ENCODE measurements at regions of chr7 and their contacts with region 1.

Region 1: GRCh38 chr7:18495412-18496340 is at the start of gene HDAC9:
- DNase-seq: peak in 1 of 2 donors; percentile 71
- H3K4me3 ChIP-seq: peak within 1 kb of the TSS; percentile 55 to 67
- H3K27ac ChIP-seq: peak within 1 kb of the TSS; percentile 77 to 78
- H3K4me1 ChIP-seq: peaks cover 0 to 24% of the 10 kb centered on the region in 2 donors
- H3K27me3 ChIP-seq: no peaks in the 10 kb centered on the region
- CTCF ChIP-seq: no peak
- total RNA-seq, gene HDAC9: 33.4 TPM

Region 2: DNA sequence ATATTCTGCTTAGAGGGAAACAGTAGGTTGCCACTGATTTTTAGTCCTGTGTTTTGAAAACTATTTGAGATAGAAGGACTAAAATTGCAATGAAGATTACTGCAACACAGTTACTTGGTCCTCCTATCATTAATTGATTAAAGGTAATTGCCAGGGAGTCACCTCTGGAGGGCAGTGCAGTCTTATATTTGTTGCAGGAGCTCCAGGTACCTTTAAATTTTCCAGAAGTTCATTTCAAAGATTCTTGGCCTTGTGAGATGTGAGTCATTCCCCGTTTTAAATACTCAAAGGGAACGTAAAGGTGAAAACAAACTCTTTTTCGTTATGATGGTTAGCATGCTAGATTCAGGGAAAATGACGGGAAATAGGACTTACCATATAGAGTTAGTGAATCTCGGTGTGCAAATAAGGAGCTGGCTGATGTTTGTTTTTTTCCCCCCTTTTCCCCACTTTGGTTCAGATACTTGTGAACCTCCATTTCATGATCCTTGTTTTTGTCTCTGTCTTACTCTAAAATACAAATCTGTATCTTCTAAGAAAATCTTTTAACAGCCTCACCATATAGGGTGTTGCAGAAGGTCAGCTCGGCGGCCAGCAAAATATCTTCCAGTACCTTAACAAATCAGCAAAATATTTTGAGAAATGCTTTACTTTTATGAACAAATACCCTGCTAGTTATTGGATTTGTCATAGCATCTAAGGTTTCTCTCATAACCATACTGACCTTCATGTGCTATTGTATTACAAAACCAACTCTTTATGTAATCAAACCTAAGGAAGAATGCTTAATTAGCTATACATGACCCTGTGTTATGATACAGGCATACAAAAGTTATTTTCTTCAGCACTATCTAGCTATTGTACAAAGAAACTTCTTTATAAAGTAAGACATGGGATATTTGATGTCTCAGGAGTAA is 143.1 kb before region 1 on chr7:
- intact Hi-C with region 1: loop called (anchors 5 kb)
- DNase-seq: peak in 1 of 2 donors; percentile 66
- H3K4me3 ChIP-seq: peak overlapping the region in 1 of 2 donors; percentile 10
- H3K27ac ChIP-seq: no peak overlapping the region
- H3K4me1 ChIP-seq: peaks cover 0 to 11% of the 10 kb centered on the region in 2 donors
- H3K27me3 ChIP-seq: no peaks in the 10 kb centered on the region
- CTCF ChIP-seq: peak; percentile 38 to 69 (median 52)

Region 3: GRCh38 chr7:18393465-18394118 is 102.1 kb before region 1 on chr7:
- intact Hi-C with region 1: loop called (anchors 5 kb)
- DNase-seq: no peak
- H3K4me3 ChIP-seq: no peak overlapping the region
- H3K27ac ChIP-seq: no peak overlapping the region
- H3K4me1 ChIP-seq: peaks cover 5 to 22% of the 10 kb centered on the region in 2 donors
- H3K27me3 ChIP-seq: no peaks in the 10 kb centered on the region
- CTCF ChIP-seq: no peak

Region 4: GRCh38 chr7:18558503-18558902 is 62.8 kb after region 1 on chr7:
- intact Hi-C with region 1: loop called (anchors 5 kb)
- DNase-seq: no peak
- H3K4me3 ChIP-seq: no peak overlapping the region
- H3K27ac ChIP-seq: peak overlapping the region; percentile 70 to 76
- H3K4me1 ChIP-seq: peaks cover 5 to 28% of the 10 kb centered on the region in 2 donors
- H3K27me3 ChIP-seq: no peaks in the 10 kb centered on the region
- CTCF ChIP-seq: no peak

Region 5: GRCh38 chr7:18570890-18571478 is 75.3 kb after region 1 on chr7:
- intact Hi-C with region 1: loop called (anchors 2 kb)
- DNase-seq: no peak
- H3K4me3 ChIP-seq: peak overlapping the region; percentile 28 to 51
- H3K27ac ChIP-seq: peak overlapping the region; percentile 41 to 50
- H3K4me1 ChIP-seq: peaks cover 0 to 31% of the 10 kb centered on the region in 2 donors
- H3K27me3 ChIP-seq: no peaks in the 10 kb centered on the region
- CTCF ChIP-seq: peak; percentile 12 to 55 (median 40)

Region 6: DNA sequence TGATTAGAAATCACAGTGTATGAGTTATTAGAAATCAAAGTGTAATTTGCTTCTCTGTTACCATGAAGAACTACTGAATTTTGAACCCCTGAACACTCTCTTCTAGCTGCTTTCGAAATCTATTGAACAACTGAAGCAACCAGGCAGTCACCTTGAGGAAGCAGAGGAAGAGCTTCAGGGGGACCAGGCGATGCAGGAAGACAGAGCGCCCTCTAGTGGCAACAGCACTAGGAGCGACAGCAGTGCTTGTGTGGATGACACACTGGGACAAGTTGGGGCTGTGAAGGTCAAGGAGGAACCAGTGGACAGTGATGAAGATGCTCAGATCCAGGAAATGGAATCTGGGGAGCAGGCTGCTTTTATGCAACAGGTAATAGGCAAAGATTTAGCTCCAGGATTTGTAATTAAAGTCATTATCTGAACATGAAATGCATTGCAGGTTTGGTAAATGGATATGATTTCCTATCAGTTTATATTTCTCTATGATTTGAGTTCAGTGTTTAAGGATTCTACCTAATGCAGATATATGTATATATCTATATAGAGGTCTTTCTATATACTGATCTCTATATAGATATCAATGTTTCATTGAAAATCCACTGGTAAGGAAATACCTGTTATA is 170.5 kb after region 1 on chr7:
- intact Hi-C with region 1: loop called (anchors 10 kb)
- DNase-seq: peak; percentile 11 to 87
- H3K4me3 ChIP-seq: no peak overlapping the region
- H3K27ac ChIP-seq: no peak overlapping the region
- H3K4me1 ChIP-seq: peaks cover 0 to 15% of the 10 kb centered on the region in 2 donors
- H3K27me3 ChIP-seq: no peaks in the 10 kb centered on the region
- CTCF ChIP-seq: peak; percentile 65 to 95 (median 92)

Region 7: GRCh38 chr7:18859318-18859717 is 363.6 kb after region 1 on chr7:
- intact Hi-C with region 1: loop called (anchors 5 kb)
- DNase-seq: no peak
- H3K4me3 ChIP-seq: no peak overlapping the region
- H3K27ac ChIP-seq: peak overlapping the region; percentile 24 to 53
- H3K4me1 ChIP-seq: peaks cover 0 to 4% of the 10 kb centered on the region in 2 donors
- H3K27me3 ChIP-seq: no peaks in the 10 kb centered on the region
- CTCF ChIP-seq: no peak